Activated CD8-positive, alpha-beta T cell treated with anti-CD3 and anti-CD28 coated beads for 36 hours (primary cell): ENCODE measurements at regions of chr11 and their contacts with region 1.

Region 1: GRCh38 chr11:62841361-62842184 is 2.2 kb upstream of the WDR74 start:
- DNase-seq: peak; percentile 88
- ATAC-seq: peak; percentile 70
- H3K4me3 Mint-ChIP-seq: no peak overlapping the region
- H3K27ac Mint-ChIP-seq: no peak overlapping the region
- H3K4me1 Mint-ChIP-seq: peaks cover 22% of the 10 kb centered on the region
- H3K27me3 Mint-ChIP-seq: no peaks in the 10 kb centered on the region
- CTCF ChIP-seq: no peak

Region 2: GRCh38 chr11:62556108-62556871 is 285.3 kb before region 1 on chr11:
- CTCF ChIA-PET with region 1: no interaction called
- POLR2A ChIA-PET with region 1: interaction called, 11 read pairs
- intact Hi-C with region 1: no loop called
- DNase-seq: peak; percentile 95
- ATAC-seq: peak; percentile 68
- H3K4me3 Mint-ChIP-seq: peak overlapping the region; percentile 41
- H3K27ac Mint-ChIP-seq: peak overlapping the region; percentile 94
- H3K4me1 Mint-ChIP-seq: peaks cover 92% of the 10 kb centered on the region
- H3K27me3 Mint-ChIP-seq: no peaks in the 10 kb centered on the region
- CTCF ChIP-seq: no peak

Region 3: DNA sequence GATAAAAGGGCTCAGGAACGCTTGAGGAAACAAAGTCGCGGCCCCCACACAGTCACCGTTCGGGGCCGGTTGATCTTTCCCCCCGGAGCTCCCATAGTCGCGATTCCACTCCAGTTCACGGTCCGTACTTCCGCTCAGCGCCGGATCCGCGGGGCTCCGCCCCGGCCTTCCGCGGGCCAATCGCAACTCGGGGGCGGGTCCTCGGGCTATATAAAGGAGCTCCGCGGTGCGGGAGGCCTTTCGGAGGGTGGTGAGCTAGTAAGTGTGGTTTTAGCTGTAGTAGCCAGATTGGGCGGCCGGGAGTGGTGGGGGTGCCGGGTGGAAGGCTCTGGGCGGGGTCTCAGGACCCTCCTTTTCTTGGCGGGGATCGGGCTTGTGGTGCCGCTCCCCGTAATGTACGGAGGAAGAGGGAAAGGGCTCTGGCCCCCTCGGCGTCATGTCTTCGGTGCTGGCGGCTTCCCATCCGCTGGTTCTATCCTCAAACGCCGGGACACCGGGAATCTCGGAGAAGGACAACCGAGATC is 176.4 kb before region 1 on chr11 and contains the starts of genes C11orf98 and CSKMT:
- CTCF ChIA-PET with region 1: no interaction called
- POLR2A ChIA-PET with region 1: interaction called, 23 read pairs
- intact Hi-C with region 1: no loop called
- DNase-seq: peak; percentile 96
- ATAC-seq: peak; percentile 89
- H3K4me3 Mint-ChIP-seq: peak within 1 kb of the TSS; percentile 98
- H3K27ac Mint-ChIP-seq: peak within 1 kb of the TSS; percentile 92
- H3K4me1 Mint-ChIP-seq: peaks cover 33% of the 10 kb centered on the region
- H3K27me3 Mint-ChIP-seq: no peaks in the 10 kb centered on the region
- CTCF ChIP-seq: no peak
- total RNA-seq, gene C11orf98: 108 TPM
- total RNA-seq, gene CSKMT: 37.1 to 43.6 TPM

Region 4: GRCh38 chr11:62726915-62727763 is 114.4 kb before region 1 on chr11 and contains the start of gene HNRNPUL2:
- CTCF ChIA-PET with region 1: no interaction called
- POLR2A ChIA-PET with region 1: interaction called, 31 read pairs
- intact Hi-C with region 1: no loop called
- DNase-seq: peak; percentile 98
- ATAC-seq: peak; percentile 92
- H3K4me3 Mint-ChIP-seq: peak within 1 kb of the TSS; percentile 95
- H3K27ac Mint-ChIP-seq: peak within 1 kb of the TSS; percentile 99
- H3K4me1 Mint-ChIP-seq: peaks cover 43% of the 10 kb centered on the region
- H3K27me3 Mint-ChIP-seq: no peaks in the 10 kb centered on the region
- CTCF ChIP-seq: no peak
- total RNA-seq, gene HNRNPUL2: 54.9 to 58.6 TPM

Region 5: GRCh38 chr11:62777389-62777788 is 64.2 kb before region 1 on chr11:
- CTCF ChIA-PET with region 1: no interaction called
- POLR2A ChIA-PET with region 1: interaction called, 30 read pairs
- intact Hi-C with region 1: no loop called
- DNase-seq: peak; percentile 43
- ATAC-seq: peak; percentile 76
- H3K4me3 Mint-ChIP-seq: peak overlapping the region; percentile 1
- H3K27ac Mint-ChIP-seq: peak overlapping the region; percentile 85
- H3K4me1 Mint-ChIP-seq: peaks cover 16% of the 10 kb centered on the region
- H3K27me3 Mint-ChIP-seq: no peaks in the 10 kb centered on the region
- CTCF ChIP-seq: no peak

Region 6: DNA sequence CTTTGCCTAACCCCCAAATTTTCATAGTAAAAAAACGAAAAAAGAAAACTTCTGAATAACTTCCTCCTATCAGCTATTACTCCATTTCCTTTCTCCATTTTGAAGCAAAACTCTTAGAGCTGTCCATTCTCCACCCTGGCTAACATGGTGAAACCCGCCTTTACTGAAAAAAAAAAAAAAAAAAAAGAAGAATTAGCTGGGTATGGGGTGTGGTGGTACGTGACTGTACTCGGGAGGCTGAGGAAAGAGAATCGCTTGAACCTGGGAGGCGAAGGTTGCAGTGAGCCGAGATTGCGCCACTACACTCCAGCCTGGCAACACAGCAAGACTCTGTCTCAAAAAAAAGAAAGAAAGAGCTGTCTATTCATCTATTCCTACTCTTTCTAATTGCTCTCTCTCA is 25.0 kb before region 1 on chr11:
- CTCF ChIA-PET with region 1: interaction called, 3 read pairs
- POLR2A ChIA-PET with region 1: interaction called, 17 read pairs
- intact Hi-C with region 1: no loop called
- DNase-seq: no peak
- ATAC-seq: no peak
- H3K4me3 Mint-ChIP-seq: no peak overlapping the region
- H3K27ac Mint-ChIP-seq: no peak overlapping the region
- H3K4me1 Mint-ChIP-seq: peaks cover 2% of the 10 kb centered on the region
- H3K27me3 Mint-ChIP-seq: no peaks in the 10 kb centered on the region
- CTCF ChIP-seq: no peak

Region 7: GRCh38 chr11:62880803-62881578 is 39.4 kb after region 1 on chr11 and contains the start of gene SLC3A2:
- CTCF ChIA-PET with region 1: no interaction called
- POLR2A ChIA-PET with region 1: interaction called, 495 read pairs
- intact Hi-C with region 1: no loop called
- DNase-seq: peak; percentile 91
- ATAC-seq: peak; percentile 76
- H3K4me3 Mint-ChIP-seq: peak within 1 kb of the TSS; percentile 99
- H3K27ac Mint-ChIP-seq: peak within 1 kb of the TSS; percentile 100
- H3K4me1 Mint-ChIP-seq: peaks cover 41% of the 10 kb centered on the region
- H3K27me3 Mint-ChIP-seq: no peaks in the 10 kb centered on the region
- CTCF ChIP-seq: peak; percentile 71
- total RNA-seq, gene SLC3A2: 299 to 315 TPM